HEK293 (cell line): ENCODE measurements at regions of chr13 and their contacts with region 1.

Region 1: GRCh38 chr13:99436686-99437416 is 64.4 kb upstream of the TM9SF2 start:
- H3K4me3 ChIP-seq: no peak overlapping the region
- H3K27ac ChIP-seq: no peak overlapping the region
- H3K4me1 ChIP-seq: no peaks in the 10 kb centered on the region
- CTCF ChIP-seq: peak; percentile 88

Region 2: DNA sequence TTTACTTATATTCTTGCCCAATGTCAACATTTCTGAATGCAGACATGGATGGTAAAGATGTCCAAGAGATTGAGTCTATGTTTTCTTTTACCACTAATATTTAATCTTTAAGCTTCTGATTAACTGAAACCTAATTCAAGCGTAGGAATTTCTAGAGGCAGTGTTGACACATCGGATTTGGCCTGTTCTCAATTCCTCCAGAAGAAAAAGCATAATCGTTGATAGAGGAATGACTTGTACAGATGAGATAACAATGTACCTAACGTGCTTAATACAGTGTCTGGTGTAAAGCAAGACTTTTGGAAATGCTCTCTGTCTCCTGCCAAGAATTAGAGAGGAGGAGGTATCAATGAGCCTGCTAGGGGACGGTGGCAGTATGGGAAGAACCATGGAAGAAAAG is 719.6 kb before region 1 on chr13:
- CTCF ChIA-PET with region 1: no interaction called
- POLR2A ChIA-PET with region 1: no interaction called
- H3K4me3 ChIP-seq: no peak overlapping the region
- H3K27ac ChIP-seq: no peak overlapping the region
- H3K4me1 ChIP-seq: no peaks in the 10 kb centered on the region
- CTCF ChIP-seq: no peak

Region 3: GRCh38 chr13:98842864-98843481 is 593.9 kb before region 1 on chr13:
- CTCF ChIA-PET with region 1: no interaction called
- POLR2A ChIA-PET with region 1: no interaction called
- H3K4me3 ChIP-seq: no peak overlapping the region
- H3K27ac ChIP-seq: no peak overlapping the region
- H3K4me1 ChIP-seq: no peaks in the 10 kb centered on the region
- CTCF ChIP-seq: no peak

Region 4: GRCh38 chr13:99176309-99177276 is 260.3 kb before region 1 on chr13:
- CTCF ChIA-PET with region 1: interaction called, 56 read pairs
- POLR2A ChIA-PET with region 1: interaction called, 3 read pairs
- H3K4me3 ChIP-seq: no peak overlapping the region
- H3K27ac ChIP-seq: no peak overlapping the region
- H3K4me1 ChIP-seq: no peaks in the 10 kb centered on the region
- CTCF ChIP-seq: peak; percentile 67; the same call in 1 of the 2 replicates

Region 5: DNA sequence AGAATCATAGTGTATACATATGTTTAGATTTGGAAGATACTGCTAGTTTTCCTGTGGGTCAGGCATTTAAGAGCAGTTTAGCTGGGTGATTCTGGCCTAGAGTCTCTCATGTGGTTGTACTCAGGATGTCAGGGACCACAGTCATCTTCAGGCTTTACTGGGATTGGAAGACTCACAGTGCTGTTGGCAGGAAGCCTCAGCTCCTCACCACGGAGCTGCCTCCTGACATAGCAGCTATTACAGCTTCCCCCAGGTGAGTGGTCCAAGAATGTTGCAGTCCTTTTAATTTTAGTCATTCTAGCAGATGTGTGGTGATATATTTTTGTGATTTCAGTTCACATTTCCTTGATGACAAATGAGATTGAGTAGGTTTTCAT is 161.8 kb before region 1 on chr13:
- CTCF ChIA-PET with region 1: interaction called, 73 read pairs
- POLR2A ChIA-PET with region 1: no interaction called
- H3K4me3 ChIP-seq: no peak overlapping the region
- H3K27ac ChIP-seq: no peak overlapping the region
- H3K4me1 ChIP-seq: no peaks in the 10 kb centered on the region
- CTCF ChIP-seq: no peak

Region 6: DNA sequence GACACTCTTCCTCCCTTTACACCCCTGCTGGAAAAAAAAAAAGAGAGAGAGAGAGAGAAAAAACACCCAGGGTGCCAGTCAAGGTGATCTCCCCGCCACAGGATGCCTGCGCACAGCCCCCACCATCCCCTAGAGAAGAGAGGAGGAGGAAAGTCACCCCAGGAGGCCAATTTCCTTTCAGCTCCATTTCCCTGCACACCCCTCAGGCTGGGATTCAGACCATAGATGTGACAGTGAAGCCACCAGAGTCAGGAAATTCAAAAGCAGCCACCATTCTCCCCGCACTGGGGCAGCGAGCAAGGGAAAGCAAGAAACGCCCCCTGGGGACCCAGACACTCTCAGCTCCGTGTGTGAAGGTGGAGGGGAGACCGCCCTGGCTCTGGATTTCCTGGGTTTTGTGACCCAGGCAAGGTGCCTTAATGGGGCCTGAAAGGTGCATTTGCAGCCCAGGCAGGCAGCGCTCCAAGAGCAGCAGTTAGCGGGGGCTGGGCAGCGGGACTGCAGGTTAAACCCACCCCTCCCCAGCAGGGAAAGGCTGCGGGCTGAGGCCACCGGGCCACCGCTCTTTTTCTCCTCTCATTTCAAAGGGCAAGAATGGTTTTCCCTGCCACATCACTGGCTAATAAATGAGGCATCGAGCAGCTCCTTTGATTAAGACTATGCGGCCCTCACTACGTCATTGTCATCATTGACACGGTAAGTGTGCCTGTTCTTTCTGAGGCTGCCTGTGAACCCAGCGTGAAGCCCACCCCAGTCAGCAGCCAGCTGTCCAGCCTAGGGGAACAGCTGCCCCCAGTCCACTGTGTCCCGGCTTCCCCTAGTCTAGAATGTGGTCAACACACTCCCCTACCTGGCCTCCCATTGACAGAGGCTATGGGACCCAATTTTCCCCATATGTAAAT is 19.4 kb before region 1 on chr13:
- CTCF ChIA-PET with region 1: interaction called, 26 read pairs
- POLR2A ChIA-PET with region 1: no interaction called
- H3K4me3 ChIP-seq: no peak overlapping the region
- H3K27ac ChIP-seq: no peak overlapping the region
- H3K4me1 ChIP-seq: no peaks in the 10 kb centered on the region
- CTCF ChIP-seq: no peak

Region 7: GRCh38 chr13:99448546-99448945 is 11.7 kb after region 1 on chr13:
- CTCF ChIA-PET with region 1: interaction called, 11 read pairs
- POLR2A ChIA-PET with region 1: no interaction called
- H3K4me3 ChIP-seq: no peak overlapping the region
- H3K27ac ChIP-seq: no peak overlapping the region
- H3K4me1 ChIP-seq: no peaks in the 10 kb centered on the region
- CTCF ChIP-seq: no peak